ENCODE measurements at regions of chr4 and their contacts with region 1.

Region 1: GRCh38 chr4:47002593-47002992 is 9.2 kb upstream of the GABRA4 start:
- DNase-seq: no peak
- H3K4me3 ChIP-seq: no peak overlapping the region
- H3K27ac ChIP-seq: no peak overlapping the region
- H3K4me1 ChIP-seq: peaks cover 6% of the 10 kb centered on the region
- H3K27me3 ChIP-seq: no peaks in the 10 kb centered on the region
- CTCF ChIP-seq: peak; percentile 55

Region 2: DNA sequence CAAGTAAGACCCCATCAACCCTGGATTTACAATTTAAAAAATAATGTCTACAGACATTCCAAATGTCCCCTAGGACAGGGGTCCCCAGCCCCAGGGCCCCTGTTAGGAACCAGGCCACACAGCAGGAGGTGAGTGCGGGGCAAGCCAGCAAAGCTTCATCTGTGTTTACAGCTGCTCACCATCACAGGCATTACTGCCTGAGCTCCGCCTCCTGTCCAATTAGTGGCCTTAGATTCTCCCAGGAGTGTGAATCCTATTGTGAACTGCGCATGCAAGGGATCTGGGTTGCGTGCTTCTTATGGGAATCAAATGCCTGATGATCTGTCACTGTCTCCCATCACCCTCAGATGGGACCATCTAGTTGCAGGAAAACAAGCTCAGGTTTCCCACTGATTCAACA is 628.6 kb after region 1 on chr4:
- intact Hi-C with region 1: loop called (anchors 5 kb)
- DNase-seq: no peak
- H3K4me3 ChIP-seq: no peak overlapping the region
- H3K27ac ChIP-seq: no peak overlapping the region
- H3K4me1 ChIP-seq: no peaks in the 10 kb centered on the region
- H3K27me3 ChIP-seq: no peaks in the 10 kb centered on the region
- CTCF ChIP-seq: no peak